Activated CD4-positive, alpha-beta T cell treated with anti-CD3 and anti-CD28 coated beads for 36 hours (primary cell): ENCODE measurements at regions of chr7 and their contacts with region 1.

Region 1: GRCh38 chr7:133590795-133591194 is 337.9 kb downstream of the EXOC4 start:
- DNase-seq: no peak
- ATAC-seq: no peak
- H3K4me3 Mint-ChIP-seq: no peak overlapping the region
- H3K27ac Mint-ChIP-seq: no peak overlapping the region
- H3K4me1 Mint-ChIP-seq: no peaks in the 10 kb centered on the region
- H3K27me3 Mint-ChIP-seq: no peaks in the 10 kb centered on the region

Region 2: DNA sequence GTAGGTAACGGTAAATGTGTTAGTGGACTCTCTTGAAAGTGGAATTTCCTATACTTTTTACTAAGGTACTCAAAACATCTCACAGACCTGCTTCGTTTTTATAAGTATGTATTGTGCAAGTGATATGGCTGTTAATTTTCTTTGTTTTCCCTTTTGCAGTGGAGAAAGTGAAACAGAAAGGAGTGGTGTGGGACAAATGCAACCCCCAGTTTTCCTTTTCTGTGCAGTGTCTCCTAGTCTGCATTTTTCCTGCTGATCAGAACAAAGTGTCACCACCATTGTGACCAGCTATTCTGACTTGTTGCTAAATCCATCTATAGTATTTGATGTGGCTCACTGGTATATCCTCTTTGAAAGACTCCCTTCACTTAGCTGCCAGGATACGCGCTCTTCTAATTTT is 72.0 kb after region 1 on chr7:
- CTCF ChIA-PET with region 1: no interaction called
- POLR2A ChIA-PET with region 1: no interaction called
- intact Hi-C with region 1: no loop called
- DNase-seq: no peak
- ATAC-seq: no peak
- H3K4me3 Mint-ChIP-seq: no peak overlapping the region
- H3K27ac Mint-ChIP-seq: no peak overlapping the region
- H3K4me1 Mint-ChIP-seq: peaks cover 7% of the 10 kb centered on the region
- H3K27me3 Mint-ChIP-seq: no peaks in the 10 kb centered on the region

Region 3: DNA sequence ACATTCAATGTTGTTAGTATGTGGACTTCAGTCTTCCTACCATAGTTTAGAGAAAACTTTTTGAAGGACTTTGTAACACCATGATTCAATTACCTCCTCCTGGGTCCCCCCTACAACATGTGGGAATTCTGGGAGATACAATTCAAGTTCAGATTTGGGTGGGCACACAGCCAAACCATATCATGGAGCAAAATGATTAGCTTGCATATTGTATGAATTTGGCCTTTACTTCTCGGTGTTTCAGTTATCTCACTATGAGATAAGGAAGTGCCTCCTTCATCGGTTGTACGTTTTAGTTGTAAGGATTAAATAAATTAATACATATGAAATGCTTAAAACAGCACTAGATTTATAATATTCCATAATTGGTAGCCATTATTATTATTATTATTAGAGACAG is 90.7 kb after region 1 on chr7:
- CTCF ChIA-PET with region 1: no interaction called
- POLR2A ChIA-PET with region 1: interaction called, 12 read pairs
- intact Hi-C with region 1: no loop called
- DNase-seq: no peak
- ATAC-seq: no peak
- H3K4me3 Mint-ChIP-seq: no peak overlapping the region
- H3K27ac Mint-ChIP-seq: no peak overlapping the region
- H3K4me1 Mint-ChIP-seq: peaks cover 11% of the 10 kb centered on the region
- H3K27me3 Mint-ChIP-seq: no peaks in the 10 kb centered on the region